ENCODE measurements at regions of chr17 and their contacts with region 1.

Region 1: GRCh38 chr17:58006924-58007780 is at the start of gene SRSF1:
- DNase-seq: peak; percentile 97
- H3K4me3 Mint-ChIP-seq: peak within 1 kb of the TSS; percentile 99
- H3K27ac Mint-ChIP-seq: peak within 1 kb of the TSS; percentile 99
- H3K4me1 Mint-ChIP-seq: peaks cover 27% of the 10 kb centered on the region
- H3K27me3 Mint-ChIP-seq: no peaks in the 10 kb centered on the region
- CTCF ChIP-seq: no peak
- total RNA-seq, gene SRSF1: 381 and 493 TPM in 2 replicates

Region 2: DNA sequence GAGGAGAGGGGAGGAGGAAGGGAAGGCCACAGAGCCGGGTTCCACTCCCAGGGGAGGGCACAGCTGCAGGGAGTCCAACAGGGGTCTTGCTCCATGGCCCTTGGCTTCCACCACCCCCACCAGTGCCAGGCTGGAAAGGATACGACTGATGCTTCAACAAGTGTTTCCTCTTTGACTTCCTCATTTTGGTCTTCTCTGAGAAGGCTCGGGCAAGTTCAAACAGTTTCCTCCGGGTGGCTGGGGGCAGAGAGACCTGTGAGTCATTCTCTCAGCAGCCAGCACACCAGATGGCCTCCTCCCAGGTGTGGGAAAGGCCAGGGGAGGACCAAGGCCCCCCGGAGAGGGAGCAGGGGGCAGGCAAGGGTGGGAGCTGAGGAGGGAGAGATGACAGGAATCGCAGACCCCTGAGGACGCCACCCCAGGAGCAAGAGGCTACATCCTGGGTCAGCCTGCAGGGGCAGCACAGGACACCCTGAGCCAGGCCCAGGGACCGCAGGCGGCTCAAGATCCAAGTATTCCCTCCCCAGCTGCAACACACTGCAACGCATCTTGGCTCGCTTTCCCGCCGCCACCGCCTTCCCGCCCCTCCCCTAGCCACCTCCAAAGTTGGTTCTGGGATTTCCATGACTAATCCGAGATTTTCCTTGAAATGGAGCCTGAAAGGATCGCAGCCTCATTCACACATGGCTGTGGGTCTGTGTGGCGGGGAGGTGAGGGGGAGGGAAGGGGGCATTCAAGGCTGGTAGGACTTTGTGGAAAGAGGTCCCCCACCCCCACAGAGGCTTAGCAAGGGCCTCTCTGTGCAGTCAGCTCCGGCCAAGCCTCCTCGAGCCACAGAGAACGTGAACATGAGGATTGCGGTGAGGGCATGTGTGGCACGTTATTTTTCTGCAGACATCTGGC is 138.9 kb before region 1 on chr17:
- CTCF ChIA-PET with region 1: interaction called, 5 read pairs
- POLR2A ChIA-PET with region 1: interaction called, 10 read pairs
- intact Hi-C with region 1: no loop called
- DNase-seq: peak; percentile 93
- H3K4me3 Mint-ChIP-seq: peak overlapping the region; percentile 41
- H3K27ac Mint-ChIP-seq: peak overlapping the region; percentile 93
- H3K4me1 Mint-ChIP-seq: peaks cover 33% of the 10 kb centered on the region
- H3K27me3 Mint-ChIP-seq: no peaks in the 10 kb centered on the region
- CTCF ChIP-seq: peak; percentile 65

Region 3: GRCh38 chr17:57875309-57876115 is 131.6 kb before region 1 on chr17:
- CTCF ChIA-PET with region 1: interaction called, 5 read pairs
- POLR2A ChIA-PET with region 1: interaction called, 22 read pairs
- intact Hi-C with region 1: no loop called
- DNase-seq: peak; percentile 94
- H3K4me3 Mint-ChIP-seq: peak overlapping the region; percentile 41
- H3K27ac Mint-ChIP-seq: peak overlapping the region; percentile 51
- H3K4me1 Mint-ChIP-seq: peaks cover 45% of the 10 kb centered on the region
- H3K27me3 Mint-ChIP-seq: no peaks in the 10 kb centered on the region
- CTCF ChIP-seq: peak; percentile 52

Region 4: DNA sequence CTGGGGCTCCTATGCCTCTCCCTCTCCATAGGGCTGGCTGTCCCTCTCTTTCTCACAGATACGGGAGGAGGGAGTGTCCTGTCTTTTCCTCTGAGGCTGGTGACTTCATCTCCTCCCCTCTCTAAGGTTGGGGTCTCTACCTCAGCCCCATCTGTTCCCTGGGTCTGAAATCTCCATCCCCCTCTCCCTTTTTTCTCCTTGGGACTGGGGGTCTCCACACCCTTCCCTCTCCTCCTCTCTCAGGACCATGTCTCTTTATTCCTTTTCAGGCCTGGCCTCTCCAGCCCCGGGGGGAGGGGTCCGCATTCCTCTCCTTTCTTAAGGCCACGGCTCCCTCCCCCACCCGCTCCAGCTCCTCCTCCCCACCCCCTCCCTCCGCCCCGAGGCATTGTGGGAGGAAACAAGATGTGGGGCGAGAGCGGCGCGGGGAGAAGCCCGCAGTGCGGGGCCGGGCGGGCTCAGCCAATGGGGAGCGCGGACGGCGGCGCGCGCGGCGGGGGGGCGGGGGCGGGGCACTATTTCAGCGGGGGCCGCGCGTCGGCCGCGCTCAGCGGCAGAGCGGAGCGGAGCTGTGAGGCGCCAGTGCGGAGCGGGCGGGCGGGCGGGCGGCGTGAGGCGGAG is 75.8 kb after region 1 on chr17 and contains the start of gene DYNLL2:
- CTCF ChIA-PET with region 1: no interaction called
- POLR2A ChIA-PET with region 1: interaction called, 40 read pairs
- intact Hi-C with region 1: loop called (anchors 1 kb)
- DNase-seq: peak; percentile 91
- H3K4me3 Mint-ChIP-seq: peak within 1 kb of the TSS; percentile 72
- H3K27ac Mint-ChIP-seq: peak within 1 kb of the TSS; percentile 49
- H3K4me1 Mint-ChIP-seq: peaks cover 14% of the 10 kb centered on the region
- H3K27me3 Mint-ChIP-seq: peaks cover 29% of the 10 kb centered on the region
- CTCF ChIP-seq: no peak
- total RNA-seq, gene DYNLL2: 15.5 and 22.3 TPM in 2 replicates